GM12878 (cell line): ENCODE measurements at regions of chr19 and their contacts with region 1.

Region 1: GRCh38 chr19:35140962-35141637 is 2.0 kb upstream of the FXYD7 start:
- DNase-seq: no peak
- ATAC-seq: peak; percentile 90
- H3K4me3 ChIP-seq: peak overlapping the region; percentile 47; the same call in 1 of the 2 replicates
- H3K27ac ChIP-seq: no peak overlapping the region
- H3K4me1 ChIP-seq: peaks cover 17% of the 10 kb centered on the region
- H3K27me3 ChIP-seq: peaks cover 2 to 5% of the 10 kb centered on the region in 2 experiments; a peak in 2 of 4 replicates
- CTCF ChIP-seq: peak; percentile 38 to 75 (median 67)
- EP300 ChIP-seq: no peak
- POLR2A ChIP-seq: no peak
- RAD21 ChIP-seq: peak; percentile 47

Region 2: GRCh38 chr19:35044317-35045117 is 96.6 kb before region 1 on chr19:
- CTCF ChIA-PET with region 1: interaction called, 20 read pairs
- POLR2A ChIA-PET with region 1: interaction called, 3 read pairs
- RAD21 ChIA-PET with region 1: interaction called, 7 read pairs
- SMC1A ChIA-PET with region 1: interaction called, 4 read pairs
- in situ Hi-C with region 1: no loop called
- intact Hi-C with region 1: no loop called
- DNase-seq: no peak
- ATAC-seq: peak; percentile 31; the same call in 1 of the 3 replicates
- H3K4me3 ChIP-seq: no peak overlapping the region
- H3K27ac ChIP-seq: no peak overlapping the region
- H3K4me1 ChIP-seq: peaks cover 4% of the 10 kb centered on the region; the same call in 1 of the 2 replicates
- H3K27me3 ChIP-seq: peaks cover 0 to 2% of the 10 kb centered on the region in 2 experiments; a peak in 3 of 4 replicates
- CTCF ChIP-seq: peak; percentile 80 to 93 (median 90)
- EP300 ChIP-seq: no peak
- POLR2A ChIP-seq: no peak
- RAD21 ChIP-seq: peak; percentile 54

Region 3: DNA sequence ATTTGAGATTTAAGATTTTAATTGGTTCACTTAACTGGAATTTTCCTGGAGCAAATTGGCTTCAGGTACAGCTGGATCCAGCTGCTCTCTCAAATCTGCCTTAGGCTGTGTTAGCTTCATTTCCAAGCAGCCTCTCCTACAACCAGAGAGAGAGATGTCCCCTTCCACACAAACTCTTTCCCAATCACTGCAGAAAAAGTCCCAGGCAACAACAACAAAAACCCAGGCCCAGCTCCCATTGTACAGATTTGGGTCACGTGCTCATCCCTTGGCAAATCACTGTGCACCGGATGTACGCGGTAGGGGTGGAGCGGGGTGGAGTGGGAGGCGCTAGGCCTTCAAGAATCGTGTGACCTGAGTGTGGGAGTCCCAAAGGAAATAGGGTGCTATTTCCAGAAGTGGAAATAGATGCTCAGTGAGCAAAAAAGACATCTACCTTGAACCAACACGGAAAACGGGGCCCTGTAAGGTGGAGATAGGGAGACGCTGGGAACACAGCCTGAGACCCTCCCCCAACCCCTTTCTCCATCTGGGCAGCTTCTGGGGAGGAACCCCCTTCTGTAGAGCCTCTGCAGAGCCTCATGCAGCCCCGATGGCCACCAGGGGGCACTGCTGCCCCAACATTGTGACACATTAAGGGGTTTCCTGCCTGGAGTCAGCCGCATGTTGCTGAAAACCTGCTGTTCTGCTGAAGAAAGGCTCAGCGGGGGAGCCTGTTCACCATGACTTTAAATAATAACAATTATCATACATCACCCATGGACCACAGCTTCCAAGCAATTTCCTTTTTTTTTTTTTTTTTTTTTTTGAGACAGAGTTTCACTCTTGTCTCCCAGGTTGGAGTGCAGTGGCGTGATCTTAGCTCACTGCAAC is 74.2 kb before region 1 on chr19:
- CTCF ChIA-PET with region 1: interaction called, 71 read pairs
- POLR2A ChIA-PET with region 1: interaction called, 3 read pairs
- RAD21 ChIA-PET with region 1: interaction called, 31 read pairs
- SMC1A ChIA-PET with region 1: interaction called, 30 read pairs
- in situ Hi-C with region 1: loop called (anchors 5 kb)
- intact Hi-C with region 1: no loop called
- DNase-seq: peak; percentile 70
- ATAC-seq: peak; percentile 99
- H3K4me3 ChIP-seq: no peak overlapping the region
- H3K27ac ChIP-seq: no peak overlapping the region
- H3K4me1 ChIP-seq: peaks cover 4% of the 10 kb centered on the region; the same call in 1 of the 2 replicates
- H3K27me3 ChIP-seq: no peaks in the 10 kb centered on the region
- CTCF ChIP-seq: peak; percentile 81 to 93 (median 89)
- EP300 ChIP-seq: no peak
- POLR2A ChIP-seq: no peak
- RAD21 ChIP-seq: peak; percentile 94

Region 4: DNA sequence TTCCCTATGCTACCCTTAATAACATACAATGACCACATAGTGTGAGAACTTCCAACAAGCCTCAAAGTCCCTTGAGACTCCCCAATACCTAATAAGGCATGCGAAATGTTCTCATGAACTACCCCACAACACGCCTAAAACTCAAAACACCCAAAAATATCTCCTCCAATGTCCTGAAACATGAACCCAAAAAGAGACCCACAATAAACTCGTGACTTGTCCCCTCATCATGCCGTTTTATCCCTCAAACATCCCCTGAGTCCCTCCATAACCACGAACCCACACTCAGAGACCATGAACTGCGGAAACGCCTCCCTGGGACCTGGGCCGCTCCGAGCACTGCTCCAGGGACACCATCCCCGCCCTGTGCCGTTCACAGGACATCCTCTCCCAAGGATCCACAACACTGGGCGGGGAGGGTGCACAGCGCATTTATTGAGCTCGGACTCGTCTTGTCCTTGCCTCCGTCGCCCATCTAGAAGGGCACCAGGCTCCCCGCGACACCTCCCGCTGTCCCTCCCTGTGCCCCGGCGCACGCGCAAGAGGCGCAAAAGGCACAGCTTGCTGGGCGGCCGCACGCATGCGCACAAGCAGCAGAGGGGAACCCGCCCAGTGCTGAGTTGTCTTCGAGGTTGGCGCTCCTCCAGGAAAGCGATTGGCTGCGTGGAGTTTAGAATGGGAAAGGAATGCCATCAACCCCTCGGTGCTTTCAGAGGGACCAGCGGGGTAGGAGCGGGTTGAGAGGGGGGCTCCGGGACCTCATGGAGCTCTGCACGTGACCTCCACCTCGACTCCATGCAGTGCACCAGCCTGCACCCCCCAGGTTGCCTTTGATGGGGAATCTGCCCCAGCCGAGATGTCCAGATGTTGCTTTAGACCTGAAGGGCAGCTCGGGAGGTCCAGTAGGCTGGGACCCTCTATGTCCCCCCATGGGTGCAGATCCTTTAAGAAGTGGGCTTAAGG is 16.7 kb before region 1 on chr19:
- CTCF ChIA-PET with region 1: interaction called, 75 read pairs
- POLR2A ChIA-PET with region 1: interaction called, 6 read pairs
- RAD21 ChIA-PET with region 1: interaction called, 11 read pairs
- SMC1A ChIA-PET with region 1: interaction called, 16 read pairs
- in situ Hi-C with region 1: no loop called
- intact Hi-C with region 1: no loop called
- DNase-seq: peak; percentile 76
- ATAC-seq: peak; percentile 99
- H3K4me3 ChIP-seq: peak overlapping the region; percentile 71
- H3K27ac ChIP-seq: peak overlapping the region; percentile 62
- H3K4me1 ChIP-seq: peaks cover 18% of the 10 kb centered on the region
- H3K27me3 ChIP-seq: no peaks in the 10 kb centered on the region
- CTCF ChIP-seq: no peak
- EP300 ChIP-seq: no peak
- POLR2A ChIP-seq: peak; percentile 83
- RAD21 ChIP-seq: no peak

Region 5: DNA sequence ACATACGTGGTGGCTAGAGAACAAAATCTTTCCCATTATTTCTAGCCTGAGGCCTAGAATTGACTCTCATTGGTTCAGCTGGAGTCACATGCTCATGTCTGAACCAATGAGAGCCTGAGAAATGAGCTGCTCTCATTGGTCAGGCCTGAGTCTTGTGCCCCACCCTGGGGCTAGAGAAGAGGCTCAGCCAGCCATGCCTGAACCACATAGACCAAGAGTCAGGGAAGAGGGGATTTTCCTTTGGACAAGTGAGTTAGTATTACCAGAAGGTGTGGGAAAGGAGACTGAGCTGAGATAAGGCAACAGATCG is 20.3 kb after region 1 on chr19:
- CTCF ChIA-PET with region 1: interaction called, 19 read pairs
- POLR2A ChIA-PET with region 1: no interaction called
- RAD21 ChIA-PET with region 1: interaction called, 3 read pairs
- SMC1A ChIA-PET with region 1: interaction called, 3 read pairs
- in situ Hi-C with region 1: no loop called
- intact Hi-C with region 1: no loop called
- DNase-seq: no peak
- ATAC-seq: peak; percentile 43; the same call in 2 of the 3 replicates
- H3K4me3 ChIP-seq: no peak overlapping the region
- H3K27ac ChIP-seq: no peak overlapping the region
- H3K4me1 ChIP-seq: peaks cover 4% of the 10 kb centered on the region; the same call in 1 of the 2 replicates
- H3K27me3 ChIP-seq: no peaks in the 10 kb centered on the region
- CTCF ChIP-seq: no peak
- EP300 ChIP-seq: no peak
- POLR2A ChIP-seq: no peak
- RAD21 ChIP-seq: no peak

Region 6: GRCh38 chr19:35213663-35214632 is 72.8 kb after region 1 on chr19:
- CTCF ChIA-PET with region 1: interaction called, 22 read pairs
- POLR2A ChIA-PET with region 1: no interaction called
- RAD21 ChIA-PET with region 1: interaction called, 17 read pairs
- SMC1A ChIA-PET with region 1: interaction called, 12 read pairs
- in situ Hi-C with region 1: no loop called
- intact Hi-C with region 1: no loop called
- DNase-seq: peak; percentile 93
- ATAC-seq: peak; percentile 87
- H3K4me3 ChIP-seq: no peak overlapping the region; the same call in 1 of the 2 replicates
- H3K27ac ChIP-seq: peak overlapping the region; percentile 38
- H3K4me1 ChIP-seq: peaks cover 39% of the 10 kb centered on the region
- H3K27me3 ChIP-seq: no peaks in the 10 kb centered on the region
- CTCF ChIP-seq: no peak
- EP300 ChIP-seq: peak; percentile 87 to 92
- POLR2A ChIP-seq: no peak
- RAD21 ChIP-seq: no peak

Region 7: DNA sequence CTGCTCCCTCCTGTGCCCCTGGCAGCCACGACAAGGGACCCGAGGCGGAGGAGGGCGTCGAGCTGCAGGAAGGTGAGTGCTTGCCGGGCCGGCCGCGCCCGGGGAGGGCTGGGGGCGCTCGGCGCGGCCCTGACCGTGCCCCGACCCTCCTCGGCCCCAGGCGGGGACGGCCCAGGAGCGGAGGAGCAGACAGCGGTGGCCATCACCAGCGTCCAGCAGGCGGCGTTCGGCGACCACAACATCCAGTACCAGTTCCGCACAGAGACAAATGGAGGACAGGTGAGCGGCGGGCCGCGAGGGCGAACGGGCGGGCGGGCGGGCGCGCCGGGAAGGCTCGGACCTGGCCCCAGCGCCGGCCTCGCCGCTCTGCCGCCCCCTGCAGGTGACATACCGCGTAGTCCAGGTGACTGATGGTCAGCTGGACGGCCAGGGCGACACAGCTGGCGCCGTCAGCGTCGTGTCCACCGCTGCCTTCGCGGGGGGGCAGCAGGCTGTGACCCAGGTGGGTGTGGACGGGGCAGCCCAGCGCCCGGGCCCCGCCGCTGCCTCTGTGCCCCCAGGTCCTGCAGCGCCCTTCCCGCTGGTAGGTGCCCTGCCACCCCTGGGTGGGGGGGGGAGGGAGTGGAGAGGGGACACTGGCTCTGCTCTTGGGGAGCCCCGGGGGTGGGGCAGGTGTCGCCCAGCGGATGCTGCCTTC is 128.5 kb after region 1 on chr19:
- CTCF ChIA-PET with region 1: interaction called, 33 read pairs
- POLR2A ChIA-PET with region 1: no interaction called
- RAD21 ChIA-PET with region 1: interaction called, 9 read pairs
- SMC1A ChIA-PET with region 1: interaction called, 7 read pairs
- in situ Hi-C with region 1: no loop called
- intact Hi-C with region 1: no loop called
- DNase-seq: peak; percentile 51
- ATAC-seq: peak; percentile 86
- H3K4me3 ChIP-seq: peak overlapping the region; percentile 71
- H3K27ac ChIP-seq: peak overlapping the region; percentile 83
- H3K4me1 ChIP-seq: peaks cover 17% of the 10 kb centered on the region
- H3K27me3 ChIP-seq: no peaks in the 10 kb centered on the region
- CTCF ChIP-seq: peak; percentile 39 to 66 (median 66)
- EP300 ChIP-seq: no peak
- POLR2A ChIP-seq: peak; percentile 71
- RAD21 ChIP-seq: peak; percentile 70